Tibial artery (tissue), 4 donors: ENCODE measurements at regions of chr14 and their contacts with region 1.

Region 1: DNA sequence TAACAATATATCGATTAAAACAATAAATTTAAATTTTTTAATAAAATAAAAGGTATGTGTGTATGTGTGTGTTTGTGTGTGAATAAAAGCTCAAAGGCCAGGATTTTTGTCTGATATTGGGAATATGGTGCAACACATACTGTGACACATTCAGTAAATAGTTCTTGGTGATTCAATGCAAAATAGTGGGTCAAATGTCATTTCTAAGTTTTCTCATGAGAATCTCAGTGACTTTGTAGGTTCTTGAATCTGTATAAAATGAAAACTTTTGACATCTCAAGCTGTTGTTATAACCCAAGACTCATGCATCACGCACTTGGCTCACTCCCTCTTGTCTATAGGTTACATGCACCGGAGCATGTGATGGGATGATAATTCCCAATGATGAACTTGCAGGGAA is 16.2 kb upstream of the MED6 start:
- DNase-seq: no peak
- H3K4me3 ChIP-seq: no peak overlapping the region
- H3K27ac ChIP-seq: no peak overlapping the region
- H3K4me1 ChIP-seq: no peaks in the 10 kb centered on the region
- H3K27me3 ChIP-seq: peaks cover 0 to 12% of the 10 kb centered on the region in 2 donors
- CTCF ChIP-seq: no peak

Region 2: DNA sequence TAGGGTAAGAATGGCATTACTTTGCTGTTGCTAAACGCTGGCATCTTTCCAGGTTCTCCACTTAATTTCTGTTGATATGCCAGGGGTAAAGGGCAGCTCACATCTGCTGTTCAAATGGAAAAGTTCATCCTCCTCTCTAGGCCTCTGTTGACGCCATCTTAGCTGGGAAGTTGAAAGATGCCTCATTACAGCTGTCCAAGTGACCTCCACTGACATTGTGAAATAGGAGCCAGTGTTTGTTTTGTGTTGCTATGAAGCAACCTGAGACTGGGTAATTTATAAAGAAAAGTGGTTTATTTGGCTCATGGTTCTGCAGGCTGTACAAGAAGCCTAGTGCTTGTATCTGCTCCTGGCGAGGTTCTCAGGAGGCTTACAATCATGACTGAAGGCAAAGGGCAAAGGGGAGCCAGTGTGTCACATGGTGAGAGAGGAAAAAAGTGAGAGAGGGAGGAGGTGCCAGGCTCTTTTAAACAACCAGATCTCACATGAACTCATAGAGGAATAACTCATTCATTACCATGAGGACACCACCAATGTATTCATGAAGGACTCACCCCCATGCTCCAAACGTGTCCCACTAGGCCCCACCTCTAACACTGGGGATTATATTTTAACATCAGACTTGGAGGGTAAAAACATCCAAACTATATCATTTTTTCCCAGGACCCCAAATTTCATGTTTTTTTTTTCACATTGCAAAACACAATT is 167.9 kb before region 1 on chr14:
- intact Hi-C with region 1: no loop called
- DNase-seq: no peak
- H3K4me3 ChIP-seq: no peak overlapping the region
- H3K27ac ChIP-seq: no peak overlapping the region
- H3K4me1 ChIP-seq: no peaks in the 10 kb centered on the region
- H3K27me3 ChIP-seq: no peaks in the 10 kb centered on the region
- CTCF ChIP-seq: no peak

Region 3: GRCh38 chr14:70821584-70822529 is 205.2 kb after region 1 on chr14:
- intact Hi-C with region 1: loop called (anchors 10 kb)
- DNase-seq: peak; percentile 36 to 73
- H3K4me3 ChIP-seq: peak overlapping the region; percentile 49 to 61
- H3K27ac ChIP-seq: peak overlapping the region in 1 of 2 donors; percentile 5
- H3K4me1 ChIP-seq: peaks cover 0 to 25% (median 16%) of the 10 kb centered on the region in 4 donors
- H3K27me3 ChIP-seq: peaks cover 0 to 18% of the 10 kb centered on the region in 2 donors
- CTCF ChIP-seq: no peak